Left cardiac atrium (tissue), 4 donors: ENCODE measurements at regions of chr14 and their contacts with region 1.

Region 1: DNA sequence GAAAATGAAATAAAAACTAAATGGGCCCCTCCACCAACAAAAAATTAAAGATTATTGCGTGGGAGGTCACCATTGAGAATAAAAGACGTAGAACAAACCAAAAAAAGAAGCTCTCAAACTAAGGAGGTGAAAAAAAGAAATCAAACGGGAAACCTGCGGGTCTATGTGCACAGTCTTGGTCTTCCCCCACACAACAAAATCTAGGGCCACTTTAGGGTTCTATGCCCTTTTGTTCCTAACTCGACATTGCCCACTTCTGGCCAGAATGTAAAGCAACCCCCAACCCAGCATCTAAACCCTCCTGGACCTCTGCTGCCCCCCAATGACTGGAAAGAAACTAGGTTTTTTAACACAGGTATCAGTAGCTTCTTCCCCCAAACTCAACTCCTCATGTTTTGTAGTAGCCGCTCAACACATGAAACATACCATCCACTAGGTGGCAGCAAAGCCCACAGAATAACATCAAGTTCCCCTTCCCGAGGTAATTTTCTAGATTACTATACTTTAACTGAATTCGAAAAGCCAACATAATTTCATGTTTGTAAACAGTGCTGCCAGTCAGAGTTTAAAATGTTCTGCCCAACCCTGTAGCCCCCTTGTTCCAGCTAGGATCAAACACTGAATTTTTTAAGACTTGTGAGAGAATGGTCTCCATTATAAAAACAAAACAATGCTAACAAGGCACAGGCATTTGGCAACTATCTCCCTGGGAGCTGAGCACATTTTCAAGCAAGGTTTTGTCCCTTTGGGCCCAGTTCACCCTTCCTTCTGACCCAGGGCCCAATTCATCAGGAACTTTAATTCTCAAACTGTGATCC is 18.7 kb downstream of the DAD1 start:
- DNase-seq: peak; percentile 69
- ATAC-seq: peak; percentile 69 to 80

Region 2: DNA sequence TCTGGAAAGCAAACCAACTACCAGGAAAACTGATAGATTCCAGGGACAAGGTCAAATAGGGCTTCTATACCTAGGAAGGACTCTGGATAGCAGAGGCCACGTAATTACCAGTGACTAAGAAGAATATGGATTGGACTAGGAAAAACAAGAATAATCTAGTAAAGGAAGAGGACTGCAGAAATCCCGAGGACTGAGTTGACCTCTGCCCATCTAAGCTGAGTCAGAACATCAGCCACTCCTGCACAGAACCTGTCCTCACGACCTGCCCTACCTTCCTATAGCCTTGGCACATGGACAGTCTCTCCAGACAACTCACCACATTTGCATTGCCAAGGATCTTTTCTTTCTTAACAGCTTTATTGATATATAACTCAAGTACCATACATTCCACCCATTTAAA is 71.5 kb after region 1 on chr14:
- intact Hi-C with region 1: loop called in 1 of 2 experiments (anchors 5 kb)
- DNase-seq: no peak
- ATAC-seq: no peak

Region 3: GRCh38 chr14:22653012-22653621 is 82.8 kb after region 1 on chr14:
- intact Hi-C with region 1: loop called in 1 of 2 experiments (anchors 2 kb)
- DNase-seq: peak; percentile 48
- ATAC-seq: peak; percentile 78 to 92